BJ (cell line): ENCODE measurements at regions of chr1 and their contacts with region 1.

Region 1: GRCh38 chr1:206808615-206809014 is 36.3 kb upstream of the IL10 start:
- DNase-seq: no peak
- H3K4me3 ChIP-seq: no peak overlapping the region
- H3K27me3 ChIP-seq: 0 out of 2 replicates have a peak, but pooled peaks cover 1% of the 10 kb centered on the region
- CTCF ChIP-seq: peak; percentile 49

Region 2: DNA sequence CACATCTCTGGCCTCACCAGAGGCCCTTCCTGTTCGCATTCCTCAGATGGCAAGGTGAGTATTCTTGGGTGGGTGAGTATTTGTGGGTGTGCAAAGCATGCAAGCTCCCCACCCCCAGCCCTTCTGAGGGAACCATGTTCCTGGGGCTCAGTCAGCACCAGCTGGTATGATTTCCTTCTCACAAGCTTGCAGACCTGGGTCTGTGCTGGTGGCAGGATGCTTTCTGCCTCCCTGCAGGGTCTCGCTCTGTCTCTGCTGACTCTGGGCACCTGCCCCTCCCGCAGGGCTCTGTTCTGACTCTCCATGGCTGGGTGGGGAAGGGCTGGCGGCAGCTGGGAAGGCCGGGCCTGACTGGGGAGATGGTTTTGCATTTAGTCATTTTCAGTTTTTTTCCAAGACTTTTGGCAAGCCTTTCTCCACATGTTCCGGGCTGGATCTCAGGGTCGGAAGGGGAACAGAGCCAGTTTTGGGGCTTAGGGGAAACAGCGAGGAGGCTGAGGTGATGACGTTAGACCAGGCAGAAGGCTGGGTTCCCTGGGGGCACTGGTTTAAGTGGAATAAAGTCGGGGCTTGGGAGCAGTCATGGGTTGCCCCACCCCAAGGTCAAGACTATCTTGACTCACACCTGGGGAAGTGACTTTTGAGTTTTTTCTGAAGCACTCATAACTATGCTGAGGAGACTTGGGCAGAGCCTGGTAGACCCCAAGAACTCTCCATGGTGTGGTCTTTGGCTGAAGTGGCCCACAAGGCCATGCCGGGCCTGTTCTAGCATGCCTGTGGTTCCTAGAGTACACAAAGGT is 295.1 kb before region 1 on chr1:
- CTCF ChIA-PET with region 1: no interaction called
- POLR2A ChIA-PET with region 1: no interaction called
- DNase-seq: peak; percentile 61
- H3K4me3 ChIP-seq: no peak overlapping the region
- H3K27me3 ChIP-seq: peaks cover 3% of the 10 kb centered on the region
- CTCF ChIP-seq: no peak

Region 3: GRCh38 chr1:206635080-206635977 is 173.3 kb before region 1 on chr1 and contains the start of gene DYRK3:
- CTCF ChIA-PET with region 1: interaction called, 10 read pairs
- POLR2A ChIA-PET with region 1: no interaction called
- DNase-seq: peak; percentile 46
- H3K4me3 ChIP-seq: peak within 1 kb of the TSS; percentile 83
- H3K27me3 ChIP-seq: no peaks in the 10 kb centered on the region
- CTCF ChIP-seq: 0 out of 2 replicates have a peak, but pooled peaks have one; percentile 13
- polyA plus RNA-seq, gene DYRK3: 7.4 and 10.8 TPM in 2 replicates

Region 4: GRCh38 chr1:206725109-206725963 is 83.3 kb before region 1 on chr1:
- CTCF ChIA-PET with region 1: interaction called, 30 read pairs
- POLR2A ChIA-PET with region 1: no interaction called
- DNase-seq: no peak
- H3K4me3 ChIP-seq: no peak overlapping the region
- H3K27me3 ChIP-seq: no peaks in the 10 kb centered on the region
- CTCF ChIP-seq: peak; percentile 79

Region 5: DNA sequence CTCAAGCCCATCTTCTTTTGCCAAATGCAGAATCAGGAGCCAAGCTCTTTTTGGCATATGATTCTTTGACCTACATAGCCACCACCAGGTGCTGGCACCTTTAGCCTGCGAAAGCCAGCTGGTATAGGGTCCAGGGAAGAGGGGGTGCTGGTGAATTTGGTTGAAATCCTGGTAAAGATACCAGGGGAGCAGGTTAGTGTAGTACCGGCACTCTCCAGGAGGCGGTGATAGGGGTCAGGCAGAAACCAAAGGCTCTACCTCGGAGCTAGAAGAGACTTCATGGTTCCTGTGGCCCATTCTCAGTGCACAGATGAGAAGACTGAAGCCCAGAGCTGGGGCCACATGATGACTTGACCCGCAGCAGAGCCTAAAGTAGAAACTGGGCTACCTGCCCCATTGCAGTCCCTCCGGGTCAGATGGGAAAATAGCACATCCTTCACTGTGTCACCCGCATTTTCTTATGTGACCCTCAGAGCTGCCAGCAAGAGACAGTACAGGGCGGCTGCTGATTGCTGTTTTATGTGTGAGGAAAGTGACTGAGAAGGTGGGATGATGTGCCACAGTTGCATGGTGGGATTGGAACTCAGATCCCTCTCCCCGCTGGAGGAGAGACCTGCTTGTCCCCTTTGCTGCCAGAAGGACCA is 74.0 kb before region 1 on chr1:
- CTCF ChIA-PET with region 1: interaction called, 101 read pairs
- POLR2A ChIA-PET with region 1: no interaction called
- DNase-seq: no peak
- H3K4me3 ChIP-seq: no peak overlapping the region
- H3K27me3 ChIP-seq: no peaks in the 10 kb centered on the region
- CTCF ChIP-seq: peak; percentile 88

Region 6: GRCh38 chr1:206865013-206865671 is 56.5 kb after region 1 on chr1 and contains the start of gene IL20:
- CTCF ChIA-PET with region 1: interaction called, 10 read pairs
- POLR2A ChIA-PET with region 1: no interaction called
- DNase-seq: no peak
- H3K4me3 ChIP-seq: no peak within 1 kb of the TSS
- H3K27me3 ChIP-seq: peaks cover 7% of the 10 kb centered on the region; the same call in 1 of the 2 replicates
- CTCF ChIP-seq: peak; percentile 92
- polyA plus RNA-seq, gene IL20: not detected in 2 replicates

Region 7: DNA sequence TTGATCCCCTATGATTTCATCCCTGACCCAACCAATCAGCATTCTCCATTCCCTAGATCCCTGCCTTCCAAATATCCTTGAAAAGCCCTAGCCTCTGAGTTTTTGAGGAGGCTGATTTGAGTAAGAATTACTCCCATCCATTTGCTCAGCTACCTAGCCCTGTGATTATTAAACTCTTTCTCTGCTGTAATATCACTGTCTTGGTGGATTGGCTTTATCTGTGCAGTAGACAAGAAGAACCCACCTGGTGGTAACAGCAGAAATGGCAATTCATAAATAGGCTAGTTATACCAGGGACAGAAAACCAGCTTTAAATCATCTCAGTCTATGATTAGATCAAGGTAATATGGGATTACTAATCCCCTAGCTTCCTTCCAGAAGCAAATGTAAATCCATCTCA is 69.8 kb after region 1 on chr1:
- CTCF ChIA-PET with region 1: no interaction called
- POLR2A ChIA-PET with region 1: no interaction called
- DNase-seq: no peak
- H3K4me3 ChIP-seq: no peak overlapping the region
- H3K27me3 ChIP-seq: no peaks in the 10 kb centered on the region
- CTCF ChIP-seq: no peak; the same call in 1 of the 2 replicates

Region 8: DNA sequence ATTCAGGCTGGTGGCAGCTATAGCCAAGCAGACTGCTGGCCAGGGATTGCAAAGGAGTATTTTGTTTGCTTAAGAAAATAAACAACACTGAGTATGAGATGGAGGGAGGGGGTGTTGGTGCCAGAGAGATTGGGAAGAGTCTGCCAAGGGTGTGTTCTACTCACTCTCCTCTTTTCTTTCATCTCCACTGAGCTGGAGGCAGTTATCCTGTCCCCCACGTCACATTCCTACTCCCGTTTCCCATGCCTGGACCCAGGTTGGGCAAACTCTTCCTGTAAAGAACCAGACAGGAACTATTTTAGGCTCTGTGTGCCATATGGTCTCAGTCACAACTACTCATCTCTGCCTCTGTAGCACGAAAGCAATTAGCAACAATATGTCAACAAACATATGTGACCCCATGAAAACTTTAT is 87.2 kb after region 1 on chr1:
- CTCF ChIA-PET with region 1: interaction called, 12 read pairs
- POLR2A ChIA-PET with region 1: no interaction called
- DNase-seq: peak; percentile 83
- H3K4me3 ChIP-seq: no peak overlapping the region
- H3K27me3 ChIP-seq: no peaks in the 10 kb centered on the region
- CTCF ChIP-seq: no peak